Right ventricle myocardium superior (tissue), 1 donor: ENCODE measurements at regions of chr5 and their contacts with region 1.

Region 1: GRCh38 chr5:96876292-96876850 is at the start of gene ERAP2:
- DNase-seq: no peak
- ATAC-seq: peak; percentile 76
- total RNA-seq, gene ERAP2: 5.3 TPM

Region 2: DNA sequence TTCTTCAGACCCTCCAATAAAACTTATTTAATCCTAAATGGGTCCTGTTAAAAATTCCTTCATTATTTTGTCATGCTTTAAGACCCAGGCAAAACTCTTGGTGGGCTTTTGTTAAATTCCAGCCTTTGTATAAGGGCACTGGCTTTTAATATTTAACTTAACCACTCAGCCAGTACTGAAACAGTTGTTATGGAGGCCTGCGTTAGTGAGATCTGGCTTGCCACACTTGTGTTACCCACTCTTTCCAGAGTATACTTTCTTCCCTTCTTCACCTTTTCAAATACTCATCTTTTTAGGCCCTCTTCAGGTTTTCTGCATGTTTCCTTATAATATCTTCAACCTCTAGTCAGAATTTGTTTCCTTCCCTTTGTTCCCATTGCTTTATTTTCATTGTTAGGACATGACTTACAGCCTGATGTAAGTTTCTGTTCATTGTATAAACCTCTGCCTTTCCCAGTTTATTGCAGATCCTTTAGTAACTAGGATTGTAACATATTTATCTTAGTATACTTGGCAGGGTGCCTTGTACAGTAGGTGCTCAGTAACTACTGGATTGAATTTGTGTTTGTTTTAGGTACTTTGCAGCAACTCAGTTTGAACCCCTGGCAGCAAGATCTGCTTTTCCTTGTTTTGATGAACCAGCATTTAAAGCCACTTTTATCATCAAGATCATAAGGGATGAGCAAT is 108.3 kb after region 1 on chr5:
- intact Hi-C with region 1: loop called (anchors 10 kb)
- DNase-seq: no peak
- ATAC-seq: peak; percentile 43